ENCODE measurements at regions of chr5 and their contacts with region 1.

Region 1: GRCh38 chr5:77867194-77867691 is 91.1 kb upstream of the TBCA start:
- DNase-seq: peak in 2 of 4 experiments; percentile 12
- ATAC-seq: peak; percentile 77
- H3K4me3 ChIP-seq: no peak overlapping the region
- H3K27ac ChIP-seq: no peak overlapping the region
- H3K4me1 ChIP-seq: no peaks in the 10 kb centered on the region
- H3K27me3 ChIP-seq: peaks cover 31 to 45% of the 10 kb centered on the region in 2 experiments
- CTCF ChIP-seq: peak; percentile 15 to 36 (median 15); a peak in 3 of 6 replicates
- EP300 ChIP-seq: no peak
- POLR2A ChIP-seq: no peak
- RAD21 ChIP-seq: peak; percentile 41 to 44

Region 2: DNA sequence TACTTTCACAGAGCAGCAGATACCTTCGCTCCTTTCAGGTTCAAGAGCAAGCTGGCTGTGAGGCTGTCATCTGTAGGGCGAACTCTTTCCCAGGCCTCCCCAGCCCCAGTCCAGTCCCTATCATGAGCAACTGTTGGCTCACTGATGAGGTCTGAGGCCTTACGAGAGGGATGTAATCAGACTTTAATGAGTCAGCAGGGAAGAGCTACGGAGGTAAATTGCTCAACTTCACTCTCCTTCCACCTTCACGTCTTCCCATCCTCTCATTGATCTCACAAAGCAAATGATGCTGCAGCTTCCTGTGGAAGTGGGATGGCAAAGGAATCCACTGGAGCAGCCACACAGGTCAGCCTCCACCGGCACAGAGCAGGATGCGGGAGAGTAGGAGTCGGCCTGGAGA is 39.6 kb after region 1 on chr5:
- CTCF ChIA-PET with region 1: no interaction called
- POLR2A ChIA-PET with region 1: no interaction called
- in situ Hi-C with region 1: no loop called
- intact Hi-C with region 1: loop called (anchors 5 kb)
- DNase-seq: peak in 2 of 4 experiments; percentile 18 to 24
- ATAC-seq: peak; percentile 58; the same call in 2 of the 3 replicates
- H3K4me3 ChIP-seq: no peak overlapping the region
- H3K27ac ChIP-seq: no peak overlapping the region
- H3K4me1 ChIP-seq: no peaks in the 10 kb centered on the region; a peak in 2 of 5 replicates
- H3K27me3 ChIP-seq: peaks cover 10 to 13% of the 10 kb centered on the region in 2 experiments; a peak in 4 of 5 replicates
- CTCF ChIP-seq: no peak
- EP300 ChIP-seq: no peak
- POLR2A ChIP-seq: no peak
- RAD21 ChIP-seq: no peak

Region 3: GRCh38 chr5:77981818-77982217 is 114.6 kb after region 1 on chr5:
- CTCF ChIA-PET with region 1: interaction called, 4 read pairs
- POLR2A ChIA-PET with region 1: no interaction called
- in situ Hi-C with region 1: no loop called
- intact Hi-C with region 1: loop called (anchors 10 kb)
- DNase-seq: no peak
- ATAC-seq: peak; percentile 69
- H3K4me3 ChIP-seq: no peak overlapping the region
- H3K27ac ChIP-seq: no peak overlapping the region
- H3K4me1 ChIP-seq: peaks cover 0 to 3% of the 10 kb centered on the region in 2 experiments; a peak in 1 of 5 replicates
- H3K27me3 ChIP-seq: peaks cover 9 to 21% of the 10 kb centered on the region in 2 experiments
- CTCF ChIP-seq: peak; percentile 19 to 39 (median 29); a peak in 2 of 6 replicates
- EP300 ChIP-seq: no peak
- POLR2A ChIP-seq: no peak
- RAD21 ChIP-seq: peak; percentile 58 to 76

Measured in K562 (cell line).